ENCODE measurements at regions of chr2 and their contacts with region 1.

Region 1: DNA sequence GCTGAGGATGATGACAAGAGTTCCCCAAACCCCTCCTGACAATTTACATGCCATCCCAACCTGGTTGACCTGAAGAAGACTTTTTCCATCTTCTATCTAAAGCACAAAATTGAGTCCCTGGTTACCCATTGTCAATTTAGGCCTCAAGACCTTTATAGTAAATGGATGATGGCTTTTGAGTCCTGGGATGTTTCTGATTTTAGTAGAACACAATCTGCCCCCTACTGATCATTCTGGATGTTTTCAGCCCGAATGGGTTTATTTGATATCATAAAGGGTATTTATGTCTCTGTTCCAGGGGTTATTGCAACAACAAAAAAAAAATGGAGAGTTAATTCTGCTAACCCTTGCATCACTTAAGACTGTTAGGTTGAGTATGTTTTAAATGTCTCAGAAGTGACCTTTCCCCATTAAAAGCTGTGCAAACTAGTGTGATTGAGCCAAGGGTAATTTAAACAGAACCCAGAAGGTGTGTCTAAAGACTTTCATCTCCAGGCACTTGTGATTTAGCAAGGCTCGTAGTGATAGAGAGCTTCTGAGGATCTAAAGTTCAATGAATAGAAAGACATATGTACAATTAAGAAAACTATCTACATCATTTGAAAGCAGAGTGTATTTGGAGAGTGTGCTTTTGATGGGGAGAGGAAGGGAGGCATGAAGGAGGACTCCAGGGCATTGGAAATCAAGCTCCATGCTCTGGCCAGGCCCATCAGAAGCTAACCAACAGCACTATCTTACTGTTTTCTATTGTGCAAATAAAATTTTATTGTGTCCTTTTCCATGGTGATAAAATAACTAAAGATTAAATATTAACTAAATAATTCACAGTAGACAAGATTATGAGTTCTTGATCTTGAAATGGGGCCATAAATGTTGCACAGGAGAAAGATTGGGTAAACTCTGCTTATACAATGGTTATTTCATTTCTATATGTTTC is 96.6 kb upstream of the NOSTRIN start:
- DNase-seq: peak; percentile 64 to 79
- H3K4me3 ChIP-seq: no peak overlapping the region
- H3K4me3 Mint-ChIP-seq: peak overlapping the region; percentile 8
- H3K27ac Mint-ChIP-seq: peak overlapping the region; percentile 67
- H3K4me1 ChIP-seq: peaks cover 38% of the 10 kb centered on the region
- H3K4me1 Mint-ChIP-seq: peaks cover 18% of the 10 kb centered on the region
- H3K27me3 ChIP-seq: no peaks in the 10 kb centered on the region
- H3K27me3 Mint-ChIP-seq: no peaks in the 10 kb centered on the region
- CTCF ChIP-seq: peak; percentile 39 to 47

Region 2: GRCh38 chr2:167943897-167944296 is 761.9 kb before region 1 on chr2:
- CTCF ChIA-PET with region 1: no interaction called
- POLR2A ChIA-PET with region 1: no interaction called
- intact Hi-C with region 1: no loop called
- DNase-seq: no peak
- H3K4me3 ChIP-seq: no peak overlapping the region
- H3K4me3 Mint-ChIP-seq: no peak overlapping the region
- H3K27ac Mint-ChIP-seq: no peak overlapping the region
- H3K4me1 ChIP-seq: no peaks in the 10 kb centered on the region
- H3K4me1 Mint-ChIP-seq: no peaks in the 10 kb centered on the region
- H3K27me3 ChIP-seq: no peaks in the 10 kb centered on the region; the same call in 1 of the 2 replicates
- H3K27me3 Mint-ChIP-seq: peaks cover 14% of the 10 kb centered on the region
- CTCF ChIP-seq: no peak

Region 3: GRCh38 chr2:168490015-168490874 is 215.6 kb before region 1 on chr2:
- CTCF ChIA-PET with region 1: interaction called, 3 read pairs
- POLR2A ChIA-PET with region 1: no interaction called
- intact Hi-C with region 1: loop called (anchors 5 kb)
- DNase-seq: no peak
- H3K4me3 ChIP-seq: no peak overlapping the region
- H3K4me3 Mint-ChIP-seq: peak overlapping the region; percentile 12
- H3K27ac Mint-ChIP-seq: peak overlapping the region; percentile 56
- H3K4me1 ChIP-seq: peaks cover 52% of the 10 kb centered on the region
- H3K4me1 Mint-ChIP-seq: peaks cover 59% of the 10 kb centered on the region
- H3K27me3 ChIP-seq: no peaks in the 10 kb centered on the region
- H3K27me3 Mint-ChIP-seq: no peaks in the 10 kb centered on the region
- CTCF ChIP-seq: no peak

Region 4: GRCh38 chr2:168687314-168687713 is 18.5 kb before region 1 on chr2:
- CTCF ChIA-PET with region 1: interaction called, 5 read pairs
- POLR2A ChIA-PET with region 1: no interaction called
- intact Hi-C with region 1: loop called (anchors 2 kb)
- DNase-seq: no peak
- H3K4me3 ChIP-seq: no peak overlapping the region
- H3K4me3 Mint-ChIP-seq: no peak overlapping the region
- H3K27ac Mint-ChIP-seq: no peak overlapping the region
- H3K4me1 ChIP-seq: peaks cover 10% of the 10 kb centered on the region
- H3K4me1 Mint-ChIP-seq: peaks cover 11% of the 10 kb centered on the region
- H3K27me3 ChIP-seq: no peaks in the 10 kb centered on the region
- H3K27me3 Mint-ChIP-seq: no peaks in the 10 kb centered on the region
- CTCF ChIP-seq: peak in 1 of 2 experiments; percentile 29

Region 5: DNA sequence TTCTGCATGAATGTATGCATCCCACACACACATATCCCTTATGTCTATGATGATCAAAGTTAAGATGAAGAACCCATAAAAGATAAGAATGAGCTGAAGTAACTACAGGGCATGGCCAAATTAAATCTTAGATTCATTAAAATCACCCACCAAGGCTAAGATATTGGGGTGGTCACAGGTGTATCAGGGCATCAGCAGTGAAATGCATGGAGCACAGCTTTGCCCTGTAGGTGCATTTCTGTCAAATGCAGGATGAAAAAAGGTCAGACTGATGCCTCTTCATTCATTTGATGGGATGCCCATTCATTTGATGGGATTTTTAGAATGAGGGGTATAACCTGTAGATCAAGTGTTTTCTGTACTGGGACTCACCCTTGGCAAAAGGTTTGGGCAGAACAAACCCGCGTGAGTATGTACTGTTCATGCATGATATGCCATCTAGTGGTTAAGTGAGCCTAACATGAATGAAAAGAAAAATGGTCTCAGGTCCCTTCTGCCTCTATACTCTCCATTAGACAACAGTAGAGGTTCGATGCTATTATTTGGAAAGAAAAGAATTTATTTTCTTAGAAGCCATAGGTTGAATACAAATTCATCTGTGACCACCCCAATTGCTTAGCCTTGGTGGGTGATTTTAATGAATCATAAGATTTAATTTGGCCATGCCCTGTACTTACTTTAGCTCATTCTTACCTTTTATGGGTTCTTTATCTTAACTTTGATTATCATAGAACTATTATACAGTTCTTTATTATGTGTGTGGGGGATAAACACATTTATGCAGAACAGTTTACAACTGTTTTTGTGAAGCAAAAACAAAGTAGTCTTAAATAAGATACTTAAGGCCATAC is 53.4 kb after region 1 on chr2:
- CTCF ChIA-PET with region 1: no interaction called
- POLR2A ChIA-PET with region 1: no interaction called
- intact Hi-C with region 1: loop called (anchors 2 kb)
- DNase-seq: peak in 1 of 2 experiments; percentile 52
- H3K4me3 ChIP-seq: no peak overlapping the region
- H3K4me3 Mint-ChIP-seq: no peak overlapping the region
- H3K27ac Mint-ChIP-seq: no peak overlapping the region
- H3K4me1 ChIP-seq: no peaks in the 10 kb centered on the region
- H3K4me1 Mint-ChIP-seq: no peaks in the 10 kb centered on the region
- H3K27me3 ChIP-seq: no peaks in the 10 kb centered on the region
- H3K27me3 Mint-ChIP-seq: no peaks in the 10 kb centered on the region
- CTCF ChIP-seq: peak; percentile 52 to 60

Region 6: DNA sequence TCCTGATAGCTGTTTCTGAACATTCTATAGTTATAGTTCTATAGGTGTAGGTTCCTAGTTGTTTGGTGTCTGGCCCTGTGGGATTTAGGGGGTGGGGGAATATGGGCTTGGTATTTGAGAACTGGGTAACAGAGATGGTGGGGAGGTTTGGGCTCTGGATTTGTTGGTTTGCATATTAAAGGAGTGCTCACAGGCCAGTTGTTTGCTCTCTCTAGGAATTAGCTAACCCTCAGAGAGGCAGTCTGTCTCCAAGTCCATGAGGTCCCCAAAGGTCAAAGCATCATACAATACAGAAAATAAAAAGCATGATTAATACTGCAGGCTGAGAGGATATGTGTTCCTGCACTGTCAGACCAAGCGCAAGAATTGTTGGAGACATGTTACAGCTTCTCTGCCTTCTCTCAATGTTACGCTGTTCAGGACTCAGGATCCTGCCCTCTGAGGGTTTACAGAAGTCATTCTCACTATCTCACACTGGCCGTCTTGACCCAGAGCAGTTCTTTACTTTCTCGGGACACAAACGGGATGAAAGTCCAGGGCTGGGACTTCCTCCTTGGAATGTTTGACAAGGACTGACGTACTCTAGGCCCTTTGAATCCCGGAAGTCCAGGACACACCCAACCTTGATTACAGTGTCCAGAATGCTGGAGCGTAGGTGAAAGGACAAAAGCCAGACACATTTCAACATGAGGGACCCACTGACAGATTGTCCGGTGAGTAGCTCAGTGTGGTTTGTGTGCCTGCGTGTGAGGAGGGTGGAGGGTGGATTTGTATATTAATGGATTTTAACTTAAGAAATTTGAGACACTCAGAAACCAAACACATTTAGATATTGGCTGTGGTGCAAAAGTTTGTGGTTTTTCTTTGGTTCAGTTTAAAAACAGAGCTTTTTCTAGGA is 96.4 kb after region 1 on chr2 and contains the start of gene NOSTRIN:
- CTCF ChIA-PET with region 1: interaction called, 3 read pairs
- POLR2A ChIA-PET with region 1: no interaction called
- intact Hi-C with region 1: loop called (anchors 1 kb)
- DNase-seq: peak; percentile 86 to 95
- H3K4me3 ChIP-seq: peak within 1 kb of the TSS; percentile 29
- H3K4me3 Mint-ChIP-seq: peak within 1 kb of the TSS; percentile 71
- H3K27ac Mint-ChIP-seq: peak within 1 kb of the TSS; percentile 96
- H3K4me1 ChIP-seq: peaks cover 44% of the 10 kb centered on the region
- H3K4me1 Mint-ChIP-seq: peaks cover 32% of the 10 kb centered on the region
- H3K27me3 ChIP-seq: no peaks in the 10 kb centered on the region
- H3K27me3 Mint-ChIP-seq: no peaks in the 10 kb centered on the region
- CTCF ChIP-seq: no peak
- total RNA-seq, gene NOSTRIN: 9.6 and 9.8 TPM in 2 replicates

Region 7: DNA sequence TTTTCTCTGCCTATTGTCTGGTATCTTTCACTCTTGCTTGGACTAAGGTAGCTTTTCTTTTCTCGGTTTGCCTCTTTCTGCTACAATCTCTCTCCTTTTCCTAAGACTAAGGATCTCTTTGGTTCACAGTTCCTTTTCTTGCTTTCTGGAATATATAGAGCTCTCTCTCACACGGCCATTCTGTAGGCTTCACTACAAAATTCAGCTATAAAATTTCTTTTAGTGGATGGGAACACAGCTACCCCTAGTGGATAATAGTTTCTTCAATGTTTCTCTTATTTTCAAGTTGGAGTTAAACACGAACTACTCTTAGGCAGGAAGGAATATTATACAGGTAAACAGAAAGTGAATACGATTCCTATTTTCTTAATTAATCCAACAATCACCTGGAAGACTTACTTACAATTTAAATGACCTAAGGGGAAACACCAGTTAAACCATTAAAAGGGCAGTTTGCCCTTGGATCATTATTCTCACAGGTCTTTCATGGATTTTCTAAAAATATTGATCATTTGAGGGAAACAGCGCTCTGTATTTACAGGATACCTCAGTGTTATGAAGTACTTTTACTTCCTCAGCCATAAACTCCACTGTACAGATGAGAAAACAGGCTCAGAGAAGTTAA is 516.1 kb after region 1 on chr2:
- CTCF ChIA-PET with region 1: no interaction called
- POLR2A ChIA-PET with region 1: no interaction called
- intact Hi-C with region 1: no loop called
- DNase-seq: no peak
- H3K4me3 ChIP-seq: no peak overlapping the region
- H3K4me3 Mint-ChIP-seq: no peak overlapping the region
- H3K27ac Mint-ChIP-seq: no peak overlapping the region
- H3K4me1 ChIP-seq: no peaks in the 10 kb centered on the region
- H3K4me1 Mint-ChIP-seq: no peaks in the 10 kb centered on the region
- H3K27me3 ChIP-seq: no peaks in the 10 kb centered on the region
- H3K27me3 Mint-ChIP-seq: no peaks in the 10 kb centered on the region
- CTCF ChIP-seq: peak; percentile 37 to 44

Measured in Caco-2 (cell line).